Panc1 (cell line): ENCODE measurements at regions of chr17 and their contacts with region 1.

Region 1: DNA sequence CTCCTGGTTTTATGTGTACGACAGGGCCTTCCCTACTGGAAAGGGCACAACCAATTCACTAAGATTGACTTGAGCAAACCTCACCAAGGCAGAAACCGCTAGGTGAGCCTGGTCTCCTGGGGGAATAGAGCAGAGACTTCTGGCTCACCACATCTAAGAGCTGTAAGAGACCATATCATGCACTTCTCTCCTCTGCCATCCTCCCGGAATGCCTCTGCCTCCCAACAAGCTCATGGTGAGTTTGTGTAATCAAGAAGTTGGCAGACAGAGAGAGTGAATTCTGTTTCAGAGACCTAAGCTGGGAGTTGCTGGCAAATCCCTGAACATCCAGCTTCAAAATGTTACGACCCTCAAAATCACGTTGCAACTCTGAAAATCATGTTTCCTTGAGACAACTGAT is 154.8 kb downstream of the SLC39A11 start:
- DNase-seq: no peak
- ATAC-seq: no peak
- H3K4me3 ChIP-seq: no peak overlapping the region
- H3K27ac ChIP-seq: no peak overlapping the region
- H3K4me1 ChIP-seq: no peaks in the 10 kb centered on the region
- H3K27me3 ChIP-seq: no peaks in the 10 kb centered on the region
- CTCF ChIP-seq: no peak

Region 2: DNA sequence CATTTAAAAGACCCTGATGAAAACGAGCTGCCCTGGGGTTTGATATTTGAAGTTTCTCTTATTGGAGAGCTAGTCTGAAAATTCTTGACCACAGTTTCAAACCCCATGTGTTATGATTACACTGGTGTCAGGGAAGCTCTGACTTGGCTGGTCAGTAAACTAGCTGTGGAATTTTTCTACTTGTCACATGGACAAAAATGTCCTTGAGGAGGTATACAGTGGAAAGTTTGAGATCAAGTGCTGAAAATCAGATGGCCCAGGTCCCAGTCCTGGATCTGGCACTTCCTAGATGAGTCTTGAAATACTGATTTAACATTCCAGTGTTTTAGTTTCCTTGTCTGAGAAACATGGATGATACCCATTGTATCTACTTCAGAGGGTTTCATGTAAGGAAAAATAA is 847.6 kb before region 1 on chr17:
- CTCF ChIA-PET with region 1: no interaction called
- POLR2A ChIA-PET with region 1: no interaction called
- in situ Hi-C with region 1: no loop called
- intact Hi-C with region 1: no loop called
- DNase-seq: no peak
- ATAC-seq: no peak
- H3K4me3 ChIP-seq: no peak overlapping the region
- H3K27ac ChIP-seq: no peak overlapping the region
- H3K4me1 ChIP-seq: no peaks in the 10 kb centered on the region
- H3K27me3 ChIP-seq: no peaks in the 10 kb centered on the region
- CTCF ChIP-seq: no peak

Region 3: DNA sequence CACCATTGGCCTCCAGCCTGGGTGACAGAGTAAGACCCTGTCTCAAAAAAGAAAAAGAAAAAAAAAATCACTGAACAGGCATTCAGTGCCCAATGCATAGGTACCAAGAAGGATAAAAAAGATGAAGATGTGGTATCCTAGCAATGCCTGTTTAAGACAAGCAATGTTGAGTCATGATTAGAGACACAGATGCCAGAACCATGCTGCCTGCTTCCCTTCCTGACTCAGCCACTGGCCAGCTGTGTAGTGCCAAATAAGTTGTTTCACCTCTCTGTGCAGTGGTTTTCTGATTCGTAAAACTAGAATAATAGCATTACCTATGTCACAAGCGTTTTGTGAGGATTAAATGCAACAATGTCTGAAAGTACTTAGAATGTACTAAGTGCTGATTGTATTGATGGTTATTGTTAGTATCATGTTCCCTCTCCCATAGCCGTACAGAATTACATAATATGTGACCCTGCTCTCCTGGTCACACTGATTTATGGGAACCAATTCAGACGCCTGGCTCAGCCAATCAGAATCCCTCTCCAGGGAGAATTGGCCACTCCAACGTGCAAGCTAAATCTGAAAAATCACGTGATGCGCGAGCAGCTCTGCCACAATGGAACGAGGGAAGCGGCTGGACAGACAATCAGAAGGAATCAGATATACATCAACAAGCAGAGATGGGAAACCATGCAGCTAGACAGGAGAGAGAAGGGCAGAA is 87.1 kb before region 1 on chr17:
- CTCF ChIA-PET with region 1: no interaction called
- POLR2A ChIA-PET with region 1: no interaction called
- in situ Hi-C with region 1: no loop called
- intact Hi-C with region 1: no loop called
- DNase-seq: no peak
- ATAC-seq: no peak
- H3K4me3 ChIP-seq: no peak overlapping the region
- H3K27ac ChIP-seq: no peak overlapping the region
- H3K4me1 ChIP-seq: no peaks in the 10 kb centered on the region
- H3K27me3 ChIP-seq: no peaks in the 10 kb centered on the region
- CTCF ChIP-seq: no peak

Region 4: DNA sequence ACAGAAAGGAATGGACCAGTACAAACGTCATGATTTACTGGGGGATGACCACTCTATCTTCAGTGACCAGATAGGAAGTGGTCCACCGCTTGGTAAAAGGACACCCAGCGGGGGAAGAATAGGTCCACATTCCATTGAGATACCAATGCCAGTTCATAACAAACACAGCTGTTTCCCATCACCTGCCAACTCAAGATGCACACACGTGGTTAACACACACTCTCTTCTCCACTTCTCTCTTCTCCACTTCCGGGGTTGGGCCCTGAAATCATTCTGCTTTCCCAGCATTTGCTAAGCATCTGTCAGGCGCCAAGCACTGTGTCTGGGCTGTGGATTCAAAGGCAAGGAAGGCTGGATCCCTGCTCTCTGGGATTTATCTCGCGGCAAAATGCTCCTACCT is 20.7 kb before region 1 on chr17:
- CTCF ChIA-PET with region 1: interaction called, 12 read pairs
- POLR2A ChIA-PET with region 1: no interaction called
- in situ Hi-C with region 1: no loop called
- intact Hi-C with region 1: no loop called
- DNase-seq: no peak
- ATAC-seq: no peak
- H3K4me3 ChIP-seq: no peak overlapping the region
- H3K27ac ChIP-seq: no peak overlapping the region
- H3K4me1 ChIP-seq: no peaks in the 10 kb centered on the region
- H3K27me3 ChIP-seq: no peaks in the 10 kb centered on the region
- CTCF ChIP-seq: no peak

Region 5: GRCh38 chr17:73247726-73248125 is 310.0 kb after region 1 on chr17:
- CTCF ChIA-PET with region 1: no interaction called
- POLR2A ChIA-PET with region 1: no interaction called
- in situ Hi-C with region 1: no loop called
- intact Hi-C with region 1: no loop called
- DNase-seq: no peak
- ATAC-seq: no peak
- H3K4me3 ChIP-seq: no peak overlapping the region
- H3K27ac ChIP-seq: no peak overlapping the region
- H3K4me1 ChIP-seq: no peaks in the 10 kb centered on the region
- H3K27me3 ChIP-seq: no peaks in the 10 kb centered on the region
- CTCF ChIP-seq: peak; percentile 35; the same call in 1 of the 2 replicates